OCI-LY7 (cell line): ENCODE measurements at regions of chr16 and their contacts with region 1.

Region 1: GRCh38 chr16:87950765-87951549 is at the start of gene BANP:
- DNase-seq: peak; percentile 100
- H3K4me3 ChIP-seq: peak within 1 kb of the TSS; percentile 74
- H3K27ac ChIP-seq: peak within 1 kb of the TSS; percentile 76
- H3K4me1 ChIP-seq: peaks cover 53% of the 10 kb centered on the region
- CTCF ChIP-seq: peak; percentile 65
- total RNA-seq, gene BANP: 37.1 and 39.6 TPM in 2 replicates

Region 2: GRCh38 chr16:87918866-87919680 is 31.9 kb before region 1 on chr16:
- CTCF ChIA-PET with region 1: interaction called, 11 read pairs
- POLR2A ChIA-PET with region 1: no interaction called
- intact Hi-C with region 1: no loop called
- DNase-seq: no peak
- H3K4me3 ChIP-seq: no peak overlapping the region
- H3K27ac ChIP-seq: no peak overlapping the region
- H3K4me1 ChIP-seq: no peaks in the 10 kb centered on the region
- CTCF ChIP-seq: no peak

Region 3: DNA sequence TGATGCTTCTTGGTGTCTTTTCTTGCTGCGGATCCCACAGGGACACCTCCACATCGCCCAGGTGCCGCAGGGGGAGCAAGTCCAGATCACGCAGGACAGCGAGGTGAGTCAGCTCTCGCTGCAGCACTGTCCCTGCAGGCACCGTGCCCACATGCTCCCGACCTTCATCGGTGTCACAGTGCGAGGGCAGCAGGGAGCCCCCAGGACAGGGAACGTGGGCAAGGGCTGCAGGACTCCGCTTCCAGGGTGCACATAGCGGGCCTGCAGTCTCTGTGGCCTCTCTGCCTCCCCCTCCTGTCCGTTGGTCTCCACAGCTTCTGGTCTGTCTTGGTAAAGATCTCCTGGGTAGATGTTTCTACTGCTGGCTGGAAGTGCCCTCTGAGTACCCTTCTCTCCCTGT is 84.3 kb after region 1 on chr16:
- CTCF ChIA-PET with region 1: no interaction called
- POLR2A ChIA-PET with region 1: no interaction called
- intact Hi-C with region 1: no loop called
- DNase-seq: no peak
- H3K4me3 ChIP-seq: no peak overlapping the region
- H3K27ac ChIP-seq: no peak overlapping the region
- H3K4me1 ChIP-seq: no peaks in the 10 kb centered on the region
- CTCF ChIP-seq: no peak

Region 4: GRCh38 chr16:88045820-88046303 is 94.9 kb after region 1 on chr16:
- CTCF ChIA-PET with region 1: no interaction called
- POLR2A ChIA-PET with region 1: interaction called, 5 read pairs
- intact Hi-C with region 1: loop called (anchors 2 kb)
- DNase-seq: peak; percentile 92
- H3K4me3 ChIP-seq: peak overlapping the region; percentile 28
- H3K27ac ChIP-seq: peak overlapping the region; percentile 69
- H3K4me1 ChIP-seq: peaks cover 38% of the 10 kb centered on the region
- CTCF ChIP-seq: no peak